Caco-2 (cell line): ENCODE measurements at regions of chr3 and their contacts with region 1.

Region 1: GRCh38 chr3:105686278-105686897 is 182.4 kb downstream of the CBLB start:
- DNase-seq: no peak
- H3K4me3 ChIP-seq: no peak overlapping the region
- H3K4me3 Mint-ChIP-seq: no peak overlapping the region
- H3K27ac Mint-ChIP-seq: no peak overlapping the region
- H3K4me1 ChIP-seq: peaks cover 9% of the 10 kb centered on the region; the same call in 1 of the 2 replicates
- H3K4me1 Mint-ChIP-seq: peaks cover 9% of the 10 kb centered on the region
- H3K27me3 ChIP-seq: no peaks in the 10 kb centered on the region
- H3K27me3 Mint-ChIP-seq: no peaks in the 10 kb centered on the region
- CTCF ChIP-seq: peak; percentile 49 to 68

Region 2: GRCh38 chr3:105274958-105275357 is 411.4 kb before region 1 on chr3:
- CTCF ChIA-PET with region 1: no interaction called
- POLR2A ChIA-PET with region 1: no interaction called
- intact Hi-C with region 1: no loop called
- DNase-seq: no peak
- H3K4me3 ChIP-seq: no peak overlapping the region
- H3K4me3 Mint-ChIP-seq: no peak overlapping the region
- H3K27ac Mint-ChIP-seq: no peak overlapping the region
- H3K4me1 ChIP-seq: no peaks in the 10 kb centered on the region
- H3K4me1 Mint-ChIP-seq: no peaks in the 10 kb centered on the region
- H3K27me3 ChIP-seq: no peaks in the 10 kb centered on the region
- H3K27me3 Mint-ChIP-seq: peaks cover 2% of the 10 kb centered on the region
- CTCF ChIP-seq: no peak

Region 3: GRCh38 chr3:106119614-106120082 is 433.3 kb after region 1 on chr3:
- CTCF ChIA-PET with region 1: no interaction called
- POLR2A ChIA-PET with region 1: no interaction called
- intact Hi-C with region 1: loop called (anchors 2 kb)
- DNase-seq: no peak
- H3K4me3 ChIP-seq: no peak overlapping the region
- H3K4me3 Mint-ChIP-seq: no peak overlapping the region
- H3K27ac Mint-ChIP-seq: no peak overlapping the region
- H3K4me1 ChIP-seq: peaks cover 12% of the 10 kb centered on the region
- H3K4me1 Mint-ChIP-seq: peaks cover 19% of the 10 kb centered on the region
- H3K27me3 ChIP-seq: no peaks in the 10 kb centered on the region
- H3K27me3 Mint-ChIP-seq: no peaks in the 10 kb centered on the region
- CTCF ChIP-seq: no peak

Region 4: DNA sequence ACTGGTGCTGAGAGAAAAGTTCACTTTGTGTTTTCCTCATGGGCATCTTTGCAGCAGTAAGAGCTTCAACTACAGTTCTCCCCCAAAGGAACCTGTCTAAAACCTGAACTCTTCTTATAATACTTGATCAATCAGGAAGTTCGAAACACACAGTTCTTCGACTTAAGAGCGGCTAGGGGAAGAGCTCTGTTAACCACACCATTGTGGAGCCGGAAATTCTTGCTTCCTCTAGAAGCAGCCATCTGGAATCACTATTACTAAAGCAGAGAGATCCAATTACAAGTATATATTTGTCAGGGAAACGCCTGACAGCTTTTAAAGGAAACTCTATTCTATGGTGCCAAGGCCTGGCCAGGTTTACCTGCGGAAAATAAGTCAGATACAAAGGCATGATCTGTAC is 519.8 kb after region 1 on chr3:
- CTCF ChIA-PET with region 1: no interaction called
- POLR2A ChIA-PET with region 1: no interaction called
- intact Hi-C with region 1: loop called (anchors 5 kb)
- DNase-seq: no peak
- H3K4me3 ChIP-seq: no peak overlapping the region
- H3K4me3 Mint-ChIP-seq: no peak overlapping the region
- H3K27ac Mint-ChIP-seq: no peak overlapping the region
- H3K4me1 ChIP-seq: no peaks in the 10 kb centered on the region
- H3K4me1 Mint-ChIP-seq: no peaks in the 10 kb centered on the region
- H3K27me3 ChIP-seq: no peaks in the 10 kb centered on the region
- H3K27me3 Mint-ChIP-seq: no peaks in the 10 kb centered on the region
- CTCF ChIP-seq: no peak